Activated B cell treated with CpG ODN at 0.5 μM for 24 hours (primary cell): ENCODE measurements at regions of chr12 and their contacts with region 1.

Region 1: GRCh38 chr12:26126340-26127284 is 1.8 kb upstream of the BHLHE41 start:
- DNase-seq: peak; percentile 71
- ATAC-seq: peak; percentile 45
- H3K4me3 Mint-ChIP-seq: peak overlapping the region; percentile 96
- H3K27ac Mint-ChIP-seq: peak overlapping the region; percentile 96
- H3K4me1 Mint-ChIP-seq: peaks cover 63% of the 10 kb centered on the region
- H3K27me3 Mint-ChIP-seq: no peaks in the 10 kb centered on the region
- CTCF ChIP-seq: no peak

Region 2: GRCh38 chr12:26088993-26089392 is 37.6 kb before region 1 on chr12:
- CTCF ChIA-PET with region 1: no interaction called
- POLR2A ChIA-PET with region 1: no interaction called
- intact Hi-C with region 1: no loop called
- DNase-seq: no peak
- ATAC-seq: peak; percentile 94
- H3K4me3 Mint-ChIP-seq: no peak overlapping the region
- H3K27ac Mint-ChIP-seq: peak overlapping the region; percentile 31
- H3K4me1 Mint-ChIP-seq: peaks cover 6% of the 10 kb centered on the region
- H3K27me3 Mint-ChIP-seq: no peaks in the 10 kb centered on the region
- CTCF ChIP-seq: no peak

Region 3: DNA sequence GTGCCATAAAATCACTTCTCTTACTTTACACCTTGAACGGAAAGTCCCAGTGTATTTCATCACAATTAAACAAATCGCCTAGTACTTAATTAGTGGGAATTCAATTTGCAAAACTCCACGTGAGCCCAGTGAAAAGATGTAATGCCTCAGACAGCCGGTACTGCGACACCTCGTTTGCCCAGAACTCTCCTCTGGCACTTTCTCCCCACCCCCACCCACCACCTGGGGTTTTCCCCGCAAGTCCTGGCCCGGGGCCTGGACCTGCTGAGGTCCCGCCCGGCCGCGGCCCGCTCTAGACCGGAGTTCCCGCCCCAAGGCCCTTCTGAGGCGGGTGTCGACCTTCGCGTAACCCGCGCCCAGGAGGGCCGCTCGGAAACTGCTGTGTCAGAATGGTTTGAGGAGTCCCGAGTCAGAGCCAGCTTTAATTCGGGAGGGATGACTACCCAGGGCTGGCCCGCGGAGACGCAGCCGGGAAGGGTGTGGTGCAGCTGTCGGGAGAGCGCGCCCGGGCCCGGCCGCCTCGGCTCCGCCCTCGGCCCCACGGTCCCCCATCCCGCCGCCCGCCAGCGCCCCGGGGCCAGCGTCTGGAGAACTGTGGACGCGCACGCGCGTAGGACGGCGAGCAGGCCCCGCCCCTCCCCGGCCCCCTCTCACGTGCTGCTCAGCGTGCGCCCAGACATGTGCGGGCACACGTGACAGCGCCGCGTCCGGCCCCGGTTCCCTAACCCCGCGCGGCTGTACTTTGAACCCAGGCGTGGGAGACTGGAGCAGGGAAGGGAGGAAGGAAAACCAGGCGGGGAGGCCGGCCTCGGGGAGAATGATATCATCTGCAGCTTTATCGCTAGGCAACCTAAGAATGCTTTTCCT is 12.5 kb before region 1 on chr12:
- CTCF ChIA-PET with region 1: interaction called, 7 read pairs
- POLR2A ChIA-PET with region 1: interaction called, 46 read pairs
- intact Hi-C with region 1: loop called (anchors 1 kb)
- DNase-seq: peak; percentile 77
- ATAC-seq: peak; percentile 80
- H3K4me3 Mint-ChIP-seq: peak overlapping the region; percentile 85
- H3K27ac Mint-ChIP-seq: peak overlapping the region; percentile 92
- H3K4me1 Mint-ChIP-seq: peaks cover 58% of the 10 kb centered on the region
- H3K27me3 Mint-ChIP-seq: no peaks in the 10 kb centered on the region
- CTCF ChIP-seq: no peak

Region 4: DNA sequence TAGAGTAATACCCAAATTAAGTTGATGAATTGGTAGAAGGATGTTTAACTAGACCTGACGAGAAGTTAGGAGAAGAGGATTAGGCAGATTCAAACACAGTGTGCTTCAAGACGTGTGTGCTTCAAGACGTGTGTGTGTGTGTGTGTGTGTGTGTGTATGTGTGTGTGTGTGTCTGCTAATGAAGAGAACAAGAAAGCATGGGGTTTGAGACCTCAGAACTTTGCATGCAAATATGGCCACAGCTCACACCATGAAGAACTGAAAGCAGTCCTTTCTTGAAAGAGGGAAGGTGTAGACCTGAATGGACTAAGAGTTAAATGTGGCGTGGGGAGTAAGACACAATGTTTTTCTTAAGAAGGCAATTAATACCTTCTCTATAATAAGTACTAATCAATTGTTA is 36.3 kb after region 1 on chr12:
- CTCF ChIA-PET with region 1: interaction called, 74 read pairs
- POLR2A ChIA-PET with region 1: interaction called, 189 read pairs
- intact Hi-C with region 1: no loop called
- DNase-seq: no peak
- ATAC-seq: peak; percentile 74
- H3K4me3 Mint-ChIP-seq: no peak overlapping the region
- H3K27ac Mint-ChIP-seq: peak overlapping the region; percentile 67
- H3K4me1 Mint-ChIP-seq: peaks cover 61% of the 10 kb centered on the region
- H3K27me3 Mint-ChIP-seq: no peaks in the 10 kb centered on the region
- CTCF ChIP-seq: no peak

Region 5: DNA sequence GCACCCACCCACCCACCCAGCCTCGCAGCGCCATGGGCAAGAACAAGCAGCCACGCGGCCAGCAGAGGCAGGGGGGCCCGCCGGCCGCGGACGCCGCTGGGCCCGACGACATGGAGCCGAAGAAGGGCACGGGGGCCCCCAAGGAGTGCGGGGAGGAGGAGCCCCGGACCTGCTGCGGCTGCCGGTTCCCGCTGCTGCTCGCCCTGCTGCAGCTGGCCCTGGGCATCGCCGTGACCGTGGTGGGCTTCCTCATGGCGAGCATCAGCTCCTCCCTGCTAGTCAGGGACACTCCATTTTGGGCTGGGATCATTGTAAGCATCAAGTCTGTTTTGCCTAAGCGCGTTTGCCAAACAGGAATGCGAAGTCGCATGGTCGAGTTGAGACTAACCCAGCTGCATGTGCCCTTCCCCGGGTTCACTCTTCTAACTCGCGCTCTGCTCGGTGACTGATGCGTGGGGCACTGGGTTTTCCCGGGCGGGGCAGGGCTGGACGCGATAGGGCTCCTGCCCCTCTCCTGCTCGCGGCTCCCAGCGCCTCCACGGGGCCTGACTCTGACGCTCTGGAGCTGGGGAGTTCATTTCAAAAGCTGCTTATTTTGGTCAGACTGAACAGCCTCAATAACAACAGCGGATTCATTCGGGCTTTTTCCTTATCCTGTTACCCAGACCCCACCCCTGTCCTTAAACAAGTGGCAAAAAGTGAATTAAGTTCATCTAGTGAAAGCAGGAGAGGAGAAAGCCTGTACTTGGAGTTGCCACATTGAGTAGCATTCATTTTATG is 69.2 kb after region 1 on chr12:
- CTCF ChIA-PET with region 1: interaction called, 8 read pairs
- POLR2A ChIA-PET with region 1: interaction called, 34 read pairs
- intact Hi-C with region 1: loop called (anchors 1 kb)
- DNase-seq: peak; percentile 46
- ATAC-seq: peak; percentile 82
- H3K4me3 Mint-ChIP-seq: peak overlapping the region; percentile 94
- H3K27ac Mint-ChIP-seq: peak overlapping the region; percentile 87
- H3K4me1 Mint-ChIP-seq: peaks cover 13% of the 10 kb centered on the region
- H3K27me3 Mint-ChIP-seq: no peaks in the 10 kb centered on the region
- CTCF ChIP-seq: no peak

Region 6: GRCh38 chr12:26298785-26299621 is 172.4 kb after region 1 on chr12:
- CTCF ChIA-PET with region 1: interaction called, 3 read pairs
- POLR2A ChIA-PET with region 1: interaction called, 12 read pairs
- intact Hi-C with region 1: loop called (anchors 1 kb)
- DNase-seq: no peak
- ATAC-seq: peak; percentile 98
- H3K4me3 Mint-ChIP-seq: peak overlapping the region; percentile 63
- H3K27ac Mint-ChIP-seq: peak overlapping the region; percentile 80
- H3K4me1 Mint-ChIP-seq: peaks cover 34% of the 10 kb centered on the region
- H3K27me3 Mint-ChIP-seq: no peaks in the 10 kb centered on the region
- CTCF ChIP-seq: no peak

Region 7: GRCh38 chr12:26461776-26462175 is 335.2 kb after region 1 on chr12:
- CTCF ChIA-PET with region 1: no interaction called
- POLR2A ChIA-PET with region 1: interaction called, 10 read pairs
- intact Hi-C with region 1: no loop called
- DNase-seq: no peak
- ATAC-seq: peak; percentile 79
- H3K4me3 Mint-ChIP-seq: peak overlapping the region; percentile 22
- H3K27ac Mint-ChIP-seq: peak overlapping the region; percentile 54
- H3K4me1 Mint-ChIP-seq: peaks cover 24% of the 10 kb centered on the region
- H3K27me3 Mint-ChIP-seq: no peaks in the 10 kb centered on the region
- CTCF ChIP-seq: no peak

Region 8: GRCh38 chr12:26614020-26614616 is 487.5 kb after region 1 on chr12:
- CTCF ChIA-PET with region 1: interaction called, 11 read pairs
- POLR2A ChIA-PET with region 1: no interaction called
- intact Hi-C with region 1: no loop called
- DNase-seq: no peak
- ATAC-seq: peak; percentile 45
- H3K4me3 Mint-ChIP-seq: no peak overlapping the region
- H3K27ac Mint-ChIP-seq: no peak overlapping the region
- H3K4me1 Mint-ChIP-seq: no peaks in the 10 kb centered on the region
- H3K27me3 Mint-ChIP-seq: no peaks in the 10 kb centered on the region
- CTCF ChIP-seq: no peak